GM12878 (cell line): ENCODE measurements at regions of chr19 and their contacts with region 1.

Region 1: GRCh38 chr19:46265217-46265828 is 31.5 kb upstream of the HIF3A start:
- DNase-seq: peak; percentile 33
- ATAC-seq: peak; percentile 83
- H3K4me3 ChIP-seq: no peak overlapping the region
- H3K27ac ChIP-seq: no peak overlapping the region
- H3K4me1 ChIP-seq: peaks cover 5% of the 10 kb centered on the region; the same call in 1 of the 2 replicates
- H3K27me3 ChIP-seq: peaks cover 0 to 3% of the 10 kb centered on the region in 2 experiments; a peak in 2 of 4 replicates
- CTCF ChIP-seq: peak; percentile 70 to 85 (median 76); a peak in 5 of 6 replicates
- EP300 ChIP-seq: no peak
- POLR2A ChIP-seq: no peak
- RAD21 ChIP-seq: peak; percentile 89

Region 2: DNA sequence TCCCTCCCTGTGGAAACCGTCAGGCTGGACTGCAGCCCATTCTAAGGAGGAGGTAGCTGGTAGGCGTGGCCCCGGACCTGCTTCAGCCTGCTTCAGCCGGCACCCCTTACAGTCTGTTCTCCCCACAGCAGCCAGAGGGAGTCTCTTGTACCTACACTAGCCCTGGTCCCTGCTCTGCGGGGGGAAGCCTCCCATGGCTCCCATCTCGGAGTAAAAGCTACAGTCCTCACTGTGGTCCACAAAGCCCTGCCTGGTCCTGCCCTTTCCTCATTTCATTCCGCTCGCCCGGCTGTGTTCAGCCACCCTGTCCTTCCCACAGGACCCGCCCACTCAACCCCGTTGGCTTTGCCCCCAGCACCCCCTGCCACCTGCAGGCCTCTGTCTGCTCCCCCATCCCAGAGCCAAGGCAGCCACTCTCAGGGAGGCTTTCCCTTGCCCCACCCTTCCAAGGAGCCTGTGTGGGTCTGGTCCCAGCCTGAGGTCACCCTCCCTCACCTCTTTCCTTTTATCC is 243.7 kb before region 1 on chr19:
- CTCF ChIA-PET with region 1: interaction called, 75 read pairs
- POLR2A ChIA-PET with region 1: no interaction called
- RAD21 ChIA-PET with region 1: no interaction called
- SMC1A ChIA-PET with region 1: interaction called, 34 read pairs
- in situ Hi-C with region 1: loop called (anchors 5 kb)
- intact Hi-C with region 1: no loop called
- DNase-seq: no peak
- ATAC-seq: no peak
- H3K4me3 ChIP-seq: no peak overlapping the region
- H3K27ac ChIP-seq: no peak overlapping the region
- H3K4me1 ChIP-seq: no peaks in the 10 kb centered on the region
- H3K27me3 ChIP-seq: no peaks in the 10 kb centered on the region
- CTCF ChIP-seq: no peak
- EP300 ChIP-seq: no peak
- POLR2A ChIP-seq: no peak
- RAD21 ChIP-seq: no peak

Region 3: GRCh38 chr19:46076951-46077816 is 188.1 kb before region 1 on chr19:
- CTCF ChIA-PET with region 1: interaction called, 105 read pairs
- POLR2A ChIA-PET with region 1: no interaction called
- RAD21 ChIA-PET with region 1: interaction called, 7 read pairs
- SMC1A ChIA-PET with region 1: interaction called, 23 read pairs
- in situ Hi-C with region 1: loop called (anchors 5 kb)
- intact Hi-C with region 1: loop called (anchors 1 kb)
- DNase-seq: no peak
- ATAC-seq: peak; percentile 87
- H3K4me3 ChIP-seq: no peak overlapping the region
- H3K27ac ChIP-seq: no peak overlapping the region
- H3K4me1 ChIP-seq: no peaks in the 10 kb centered on the region
- H3K27me3 ChIP-seq: peaks cover 3 to 9% of the 10 kb centered on the region in 2 experiments; a peak in 3 of 4 replicates
- CTCF ChIP-seq: peak; percentile 54 to 71 (median 62)
- EP300 ChIP-seq: no peak
- POLR2A ChIP-seq: no peak
- RAD21 ChIP-seq: peak; percentile 45; the same call in 1 of the 2 replicates

Region 4: GRCh38 chr19:46133101-46133682 is 132.1 kb before region 1 on chr19:
- CTCF ChIA-PET with region 1: no interaction called
- POLR2A ChIA-PET with region 1: no interaction called
- RAD21 ChIA-PET with region 1: no interaction called
- SMC1A ChIA-PET with region 1: no interaction called
- in situ Hi-C with region 1: no loop called
- intact Hi-C with region 1: no loop called
- DNase-seq: peak; percentile 24
- ATAC-seq: no peak
- H3K4me3 ChIP-seq: no peak overlapping the region
- H3K27ac ChIP-seq: no peak overlapping the region; the same call in 1 of the 2 replicates
- H3K4me1 ChIP-seq: peaks cover 3% of the 10 kb centered on the region; the same call in 1 of the 2 replicates
- H3K27me3 ChIP-seq: peaks cover 0 to under 1% of the 10 kb centered on the region in 2 experiments; a peak in 1 of 4 replicates
- CTCF ChIP-seq: no peak
- EP300 ChIP-seq: no peak
- POLR2A ChIP-seq: no peak
- RAD21 ChIP-seq: no peak